B cell (primary cell): ENCODE measurements at regions of chr3 and their contacts with region 1.

Region 1: DNA sequence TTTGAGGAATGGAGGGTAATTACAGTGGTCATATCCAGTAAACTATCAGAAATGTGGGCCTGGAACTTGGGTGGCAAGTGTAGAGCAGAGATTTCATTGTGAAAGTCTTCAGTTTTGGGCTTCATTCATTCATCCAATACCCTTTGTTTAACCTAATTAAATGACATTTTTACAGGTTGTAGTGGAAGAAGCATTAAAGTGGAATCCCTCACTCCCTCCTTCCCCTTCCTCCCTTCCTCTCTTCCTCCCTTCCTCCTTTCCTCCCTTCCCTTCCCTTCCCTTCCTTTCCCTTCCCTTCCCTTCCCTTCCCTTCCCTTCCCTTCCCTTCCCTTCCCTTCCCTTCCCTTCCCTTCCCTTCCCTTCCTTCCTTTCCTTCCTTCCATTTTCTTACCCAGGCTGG is 219.3 kb downstream of the PDCD6IP start:
- DNase-seq: no peak
- ATAC-seq: no peak
- H3K4me3 ChIP-seq: no peak overlapping the region
- H3K4me3 Mint-ChIP-seq: no peak overlapping the region
- H3K27ac ChIP-seq: no peak overlapping the region
- H3K27ac Mint-ChIP-seq: no peak overlapping the region
- H3K4me1 ChIP-seq: peaks cover 51 to 61% of the 10 kb centered on the region in 2 donors
- H3K4me1 Mint-ChIP-seq: peaks cover 56% of the 10 kb centered on the region
- H3K27me3 ChIP-seq: peaks cover 0 to 3% (median 0%) of the 10 kb centered on the region in 4 experiments
- H3K27me3 Mint-ChIP-seq: no peaks in the 10 kb centered on the region
- CTCF ChIP-seq: no peak

Region 2: DNA sequence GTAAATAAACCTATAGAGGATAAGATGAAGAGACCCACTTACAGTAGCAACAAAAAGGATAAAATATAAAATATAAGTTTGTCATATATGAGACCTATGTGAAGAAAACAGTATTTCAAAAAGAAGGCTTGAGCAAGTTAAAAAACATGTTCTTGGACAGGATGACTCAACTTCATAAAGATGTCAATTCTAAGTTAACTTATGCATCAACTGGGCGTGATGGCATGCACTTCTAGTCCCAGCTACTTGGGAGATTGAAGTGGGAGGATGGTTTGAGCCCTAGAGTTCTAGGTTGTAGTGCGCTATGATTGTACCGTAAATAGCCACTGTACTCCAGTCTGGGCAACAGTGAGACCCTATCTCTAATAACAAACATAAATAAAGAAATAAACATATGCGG is 159.6 kb before region 1 on chr3:
- CTCF ChIA-PET with region 1: no interaction called
- POLR2A ChIA-PET with region 1: no interaction called
- intact Hi-C with region 1: no loop called
- DNase-seq: no peak
- ATAC-seq: no peak
- H3K4me3 ChIP-seq: no peak overlapping the region
- H3K4me3 Mint-ChIP-seq: no peak overlapping the region
- H3K27ac ChIP-seq: no peak overlapping the region
- H3K27ac Mint-ChIP-seq: no peak overlapping the region
- H3K4me1 ChIP-seq: no peaks in the 10 kb centered on the region
- H3K4me1 Mint-ChIP-seq: peaks cover 2% of the 10 kb centered on the region
- H3K27me3 ChIP-seq: no peaks in the 10 kb centered on the region
- H3K27me3 Mint-ChIP-seq: no peaks in the 10 kb centered on the region
- CTCF ChIP-seq: no peak

Region 3: GRCh38 chr3:34053626-34054025 is 35.9 kb after region 1 on chr3:
- CTCF ChIA-PET with region 1: no interaction called
- POLR2A ChIA-PET with region 1: no interaction called
- intact Hi-C with region 1: no loop called
- DNase-seq: no peak
- ATAC-seq: no peak
- H3K4me3 ChIP-seq: no peak overlapping the region
- H3K4me3 Mint-ChIP-seq: no peak overlapping the region
- H3K27ac ChIP-seq: no peak overlapping the region
- H3K27ac Mint-ChIP-seq: no peak overlapping the region
- H3K4me1 ChIP-seq: no peaks in the 10 kb centered on the region
- H3K4me1 Mint-ChIP-seq: peaks cover 12% of the 10 kb centered on the region
- H3K27me3 ChIP-seq: peaks cover 0 to 4% (median 0%) of the 10 kb centered on the region in 4 experiments
- H3K27me3 Mint-ChIP-seq: no peaks in the 10 kb centered on the region
- CTCF ChIP-seq: no peak

Region 4: DNA sequence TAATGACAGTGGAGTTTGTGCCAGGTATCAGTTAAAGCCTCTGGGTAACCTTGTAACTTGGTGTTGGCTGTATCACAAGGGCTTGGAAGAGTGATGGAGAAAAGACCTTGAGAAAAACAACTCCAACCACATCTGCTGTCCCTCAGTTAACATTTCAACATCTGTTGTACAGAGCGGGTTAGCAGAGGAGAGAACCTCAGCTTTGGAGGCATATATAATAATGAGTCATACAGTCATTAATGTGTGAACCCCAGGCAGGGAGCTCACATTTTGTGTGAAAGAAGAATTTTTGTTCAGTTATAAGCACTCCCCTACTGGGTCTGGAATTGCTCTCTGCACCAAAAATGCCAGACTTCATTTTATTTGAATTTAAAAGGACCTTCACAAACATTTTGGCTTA is 220.2 kb after region 1 on chr3:
- CTCF ChIA-PET with region 1: no interaction called
- POLR2A ChIA-PET with region 1: interaction called, 11 read pairs
- intact Hi-C with region 1: no loop called
- DNase-seq: no peak
- ATAC-seq: no peak
- H3K4me3 ChIP-seq: no peak overlapping the region
- H3K4me3 Mint-ChIP-seq: no peak overlapping the region
- H3K27ac ChIP-seq: no peak overlapping the region
- H3K27ac Mint-ChIP-seq: no peak overlapping the region
- H3K4me1 ChIP-seq: no peaks in the 10 kb centered on the region
- H3K4me1 Mint-ChIP-seq: peaks cover 2% of the 10 kb centered on the region
- H3K27me3 ChIP-seq: no peaks in the 10 kb centered on the region
- H3K27me3 Mint-ChIP-seq: no peaks in the 10 kb centered on the region
- CTCF ChIP-seq: no peak